CD4-positive, alpha-beta T cell (primary cell): ENCODE measurements at regions of chr20 and their contacts with region 1.

Region 1: DNA sequence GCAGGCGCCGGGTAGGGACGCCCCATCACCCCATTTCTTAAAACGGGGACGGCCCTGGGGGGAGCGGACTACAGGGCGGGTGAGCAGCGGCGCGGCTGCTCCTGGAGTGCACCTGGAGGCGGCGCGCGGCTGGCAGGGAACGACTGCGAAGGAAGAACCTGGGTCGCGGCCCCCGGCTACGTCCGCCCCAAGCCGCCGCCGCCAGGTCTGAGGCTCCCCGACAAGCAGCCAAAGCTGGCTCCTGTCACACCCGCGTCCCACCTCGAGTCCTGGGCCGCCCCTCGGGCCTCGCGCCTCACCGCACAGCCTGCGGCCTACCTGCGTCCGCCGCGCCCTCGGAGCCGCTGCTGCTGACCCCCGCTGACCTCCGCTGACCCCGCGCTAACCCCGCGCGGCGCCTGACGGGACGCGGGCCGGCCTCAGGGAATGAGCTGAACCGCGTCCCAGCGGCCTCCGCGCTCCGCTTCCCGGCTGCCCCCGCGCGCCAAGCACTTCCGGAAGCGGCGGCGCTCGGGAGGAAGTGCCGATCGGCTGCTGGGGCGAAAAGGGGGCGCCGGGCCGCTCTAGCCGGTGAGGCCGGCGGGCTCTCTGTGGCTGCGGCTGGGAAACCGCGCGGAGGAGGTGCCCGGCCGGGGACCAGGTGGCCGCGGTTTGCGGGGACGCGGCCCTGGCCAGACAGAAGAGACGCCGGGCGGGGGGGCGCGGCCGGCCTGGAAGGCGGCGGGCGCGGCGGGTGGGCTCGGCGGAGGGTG is at the starts of genes ARFRP1 and ZGPAT:
- DNase-seq: peak; percentile 71 to 94 (median 88)
- ATAC-seq: peak; percentile 78
- H3K4me3 ChIP-seq: peak within 1 kb of the TSS; percentile 76
- H3K4me3 Mint-ChIP-seq: peak within 1 kb of the TSS; percentile 88
- H3K27ac ChIP-seq: peak within 1 kb of the TSS; percentile 55 to 71
- H3K27ac Mint-ChIP-seq: peak within 1 kb of the TSS; percentile 89
- H3K4me1 ChIP-seq: peaks cover 45% of the 10 kb centered on the region
- H3K4me1 Mint-ChIP-seq: peaks cover 46% of the 10 kb centered on the region
- H3K27me3 ChIP-seq: no peaks in the 10 kb centered on the region
- H3K27me3 Mint-ChIP-seq: no peaks in the 10 kb centered on the region
- CTCF ChIP-seq: no peak
- total RNA-seq, gene ARFRP1: 34.5 to 35.7 TPM
- total RNA-seq, gene ZGPAT: 28.2 to 33.4 TPM

Region 2: DNA sequence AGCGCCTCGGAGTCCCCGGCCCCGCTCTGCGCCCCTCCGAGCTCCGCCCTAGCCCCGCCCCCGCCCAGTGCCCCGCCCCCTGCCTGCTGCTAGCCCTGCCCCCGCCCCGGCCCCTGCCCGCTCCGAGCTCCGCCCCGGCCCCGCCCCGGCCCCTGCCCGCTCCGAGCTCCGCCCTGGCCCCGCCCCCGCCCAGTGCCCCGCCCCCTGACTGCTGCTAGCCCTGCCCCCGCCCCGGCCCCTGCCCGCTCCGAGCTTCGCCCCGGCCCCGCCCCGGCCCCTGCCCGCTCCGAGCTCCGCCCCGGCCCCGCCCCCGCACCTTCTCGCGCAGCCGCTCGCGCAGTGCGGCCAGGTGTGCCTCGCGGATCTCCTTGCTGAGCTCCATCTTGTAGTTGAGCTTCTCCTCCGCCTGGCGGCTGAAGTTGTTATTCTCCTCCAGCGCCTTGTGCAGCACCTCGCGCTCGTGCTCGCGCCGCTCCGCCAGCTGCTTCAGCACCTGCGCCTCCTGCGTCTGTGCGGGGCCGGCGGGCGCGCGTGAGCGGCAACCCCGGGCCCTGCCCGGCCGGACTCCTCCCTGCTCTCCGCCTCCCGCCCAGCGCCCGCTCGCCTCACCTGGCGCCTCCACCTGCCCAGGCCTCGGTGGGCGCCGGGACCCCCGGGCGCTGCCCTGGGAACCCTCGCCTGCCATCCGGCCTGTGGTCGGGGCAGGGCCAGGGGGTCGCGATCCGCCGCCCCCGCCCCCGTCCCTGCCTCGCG is 65.8 kb before region 1 on chr20:
- CTCF ChIA-PET with region 1: interaction called, 6 read pairs
- POLR2A ChIA-PET with region 1: interaction called, 12 read pairs
- intact Hi-C with region 1: no loop called
- DNase-seq: peak; percentile 97 to 100 (median 98)
- ATAC-seq: peak; percentile 60
- H3K4me3 ChIP-seq: peak overlapping the region; percentile 91
- H3K4me3 Mint-ChIP-seq: peak overlapping the region; percentile 88
- H3K27ac ChIP-seq: peak overlapping the region; percentile 68 to 87
- H3K27ac Mint-ChIP-seq: peak overlapping the region; percentile 94
- H3K4me1 ChIP-seq: peaks cover 44% of the 10 kb centered on the region
- H3K4me1 Mint-ChIP-seq: peaks cover 35% of the 10 kb centered on the region
- H3K27me3 ChIP-seq: no peaks in the 10 kb centered on the region
- H3K27me3 Mint-ChIP-seq: peaks cover 4% of the 10 kb centered on the region
- CTCF ChIP-seq: peak; percentile 48

Region 3: DNA sequence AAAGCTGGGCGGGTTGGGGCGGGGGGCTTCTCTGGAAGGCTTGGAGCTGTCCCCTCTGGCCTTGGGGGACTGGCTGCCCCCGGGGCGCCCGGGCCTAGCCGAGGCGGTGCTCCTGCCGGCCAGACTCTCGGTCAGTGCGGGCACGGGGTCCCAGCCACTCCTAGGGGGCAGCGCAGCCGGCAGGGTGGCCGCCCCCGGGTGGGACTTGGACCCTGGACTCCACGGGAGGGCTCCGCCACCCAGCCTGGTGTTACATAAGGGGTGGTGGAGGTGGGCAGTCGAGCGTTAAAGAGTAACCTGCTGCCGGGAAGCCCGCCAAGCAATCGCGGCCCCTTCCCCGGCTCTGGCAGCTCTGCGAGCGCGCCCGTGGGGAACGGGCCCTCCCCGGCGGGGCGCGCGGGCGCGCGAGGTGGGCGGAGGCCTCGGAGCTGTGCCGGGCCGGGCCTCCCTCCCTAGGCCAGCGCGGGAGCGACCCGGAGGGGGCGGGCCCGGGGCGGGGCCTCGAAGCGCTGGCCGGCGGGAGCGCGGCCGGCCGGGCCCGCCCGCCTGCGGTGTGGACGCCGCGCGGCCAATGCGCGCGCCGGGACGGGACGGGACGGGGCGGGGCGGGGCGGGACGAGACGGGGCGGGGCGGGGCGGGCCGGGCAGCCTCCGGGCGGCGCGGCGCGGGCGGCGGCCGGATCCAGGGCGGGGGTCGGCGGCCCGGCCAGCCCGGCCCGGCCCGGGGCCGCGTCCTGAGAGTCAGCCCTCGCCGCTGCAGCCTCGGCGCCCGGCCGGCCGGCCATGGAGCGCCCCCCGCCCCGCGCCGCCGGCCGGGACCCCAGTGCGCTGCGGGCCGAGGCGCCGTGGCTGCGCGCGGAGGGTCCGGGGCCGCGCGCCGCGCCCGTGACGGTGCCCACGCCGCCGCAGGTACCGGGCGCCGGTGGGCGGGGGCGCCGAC is 31.7 kb after region 1 on chr20 and contains the start of gene SLC2A4RG:
- CTCF ChIA-PET with region 1: interaction called, 44 read pairs
- POLR2A ChIA-PET with region 1: interaction called, 168 read pairs
- intact Hi-C with region 1: loop called (anchors 1 to 2 kb)
- DNase-seq: peak in 11 of 14 experiments; percentile 49 to 90 (median 72)
- ATAC-seq: peak; percentile 8
- H3K4me3 ChIP-seq: peak within 1 kb of the TSS; percentile 92
- H3K4me3 Mint-ChIP-seq: peak within 1 kb of the TSS; percentile 80
- H3K27ac ChIP-seq: peak within 1 kb of the TSS; percentile 34 to 53
- H3K27ac Mint-ChIP-seq: no peak within 1 kb of the TSS
- H3K4me1 ChIP-seq: peaks cover 56% of the 10 kb centered on the region
- H3K4me1 Mint-ChIP-seq: peaks cover 16% of the 10 kb centered on the region
- H3K27me3 ChIP-seq: no peaks in the 10 kb centered on the region
- H3K27me3 Mint-ChIP-seq: no peaks in the 10 kb centered on the region
- CTCF ChIP-seq: no peak
- total RNA-seq, gene SLC2A4RG: 123 to 125 TPM

Region 4: GRCh38 chr20:63791497-63792156 is 83.9 kb after region 1 on chr20:
- CTCF ChIA-PET with region 1: interaction called, 15 read pairs
- POLR2A ChIA-PET with region 1: interaction called, 8 read pairs
- intact Hi-C with region 1: loop called (anchors 1 to 2 kb)
- DNase-seq: no peak
- ATAC-seq: no peak
- H3K4me3 ChIP-seq: no peak overlapping the region
- H3K4me3 Mint-ChIP-seq: no peak overlapping the region
- H3K27ac ChIP-seq: no peak overlapping the region
- H3K27ac Mint-ChIP-seq: no peak overlapping the region
- H3K4me1 ChIP-seq: peaks cover 5% of the 10 kb centered on the region
- H3K4me1 Mint-ChIP-seq: no peaks in the 10 kb centered on the region
- H3K27me3 ChIP-seq: no peaks in the 10 kb centered on the region
- H3K27me3 Mint-ChIP-seq: peaks cover 3% of the 10 kb centered on the region
- CTCF ChIP-seq: no peak

Region 5: DNA sequence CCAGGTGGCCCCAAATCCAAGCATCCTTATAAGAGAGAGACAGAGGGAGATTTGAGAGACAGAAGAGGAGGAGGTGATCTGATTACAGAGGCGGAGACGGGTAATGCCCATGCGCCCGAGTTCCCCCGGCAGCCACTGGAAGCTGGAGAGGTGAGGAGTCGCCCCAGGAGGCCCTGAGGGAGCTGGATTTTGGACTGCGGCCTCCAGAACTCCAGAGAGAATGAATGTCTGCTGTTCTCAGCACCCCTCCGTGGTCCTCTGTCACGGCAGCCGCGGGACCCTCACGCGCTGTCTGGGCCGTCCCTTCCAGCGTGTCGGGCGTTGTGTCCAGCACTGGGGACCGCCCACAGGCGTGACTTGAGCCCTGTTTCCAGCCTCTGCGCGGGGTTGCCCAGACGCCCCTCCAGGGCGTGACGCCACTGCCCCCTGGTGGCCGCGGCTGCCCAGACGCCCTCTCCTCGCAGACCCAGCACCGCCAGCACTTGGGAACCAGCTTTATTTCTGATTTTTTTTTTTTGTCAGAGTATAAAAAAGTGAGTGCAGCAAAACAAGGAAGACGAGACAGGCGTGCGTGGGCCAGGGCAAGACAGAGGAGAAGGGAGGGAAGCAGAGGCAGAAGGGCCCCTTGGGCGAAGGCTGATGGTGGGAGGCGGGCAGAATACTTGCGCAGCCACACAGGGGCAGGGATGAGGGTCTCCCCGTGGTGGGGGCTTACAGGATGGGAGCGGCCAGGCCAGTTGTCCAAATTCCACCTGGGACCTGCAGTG is 266.1 kb after region 1 on chr20:
- CTCF ChIA-PET with region 1: interaction called, 8 read pairs
- POLR2A ChIA-PET with region 1: no interaction called
- intact Hi-C with region 1: loop called (anchors 5 to 10 kb)
- DNase-seq: peak; percentile 62 to 89 (median 75)
- ATAC-seq: peak; percentile 51
- H3K4me3 ChIP-seq: no peak overlapping the region
- H3K4me3 Mint-ChIP-seq: peak overlapping the region; percentile 26
- H3K27ac ChIP-seq: peak overlapping the region in 1 of 2 donors; percentile 13
- H3K27ac Mint-ChIP-seq: peak overlapping the region; percentile 58
- H3K4me1 ChIP-seq: peaks cover 43% of the 10 kb centered on the region
- H3K4me1 Mint-ChIP-seq: peaks cover 56% of the 10 kb centered on the region
- H3K27me3 ChIP-seq: no peaks in the 10 kb centered on the region
- H3K27me3 Mint-ChIP-seq: no peaks in the 10 kb centered on the region
- CTCF ChIP-seq: peak; percentile 98